Posterior vena cava (tissue), 2 donors: ENCODE measurements at regions of chr1 and their contacts with region 1.

Region 1: GRCh38 chr1:47703981-47704596 is 266.2 kb downstream of the FOXD2 start:
- DNase-seq: peak; percentile 57

Region 2: DNA sequence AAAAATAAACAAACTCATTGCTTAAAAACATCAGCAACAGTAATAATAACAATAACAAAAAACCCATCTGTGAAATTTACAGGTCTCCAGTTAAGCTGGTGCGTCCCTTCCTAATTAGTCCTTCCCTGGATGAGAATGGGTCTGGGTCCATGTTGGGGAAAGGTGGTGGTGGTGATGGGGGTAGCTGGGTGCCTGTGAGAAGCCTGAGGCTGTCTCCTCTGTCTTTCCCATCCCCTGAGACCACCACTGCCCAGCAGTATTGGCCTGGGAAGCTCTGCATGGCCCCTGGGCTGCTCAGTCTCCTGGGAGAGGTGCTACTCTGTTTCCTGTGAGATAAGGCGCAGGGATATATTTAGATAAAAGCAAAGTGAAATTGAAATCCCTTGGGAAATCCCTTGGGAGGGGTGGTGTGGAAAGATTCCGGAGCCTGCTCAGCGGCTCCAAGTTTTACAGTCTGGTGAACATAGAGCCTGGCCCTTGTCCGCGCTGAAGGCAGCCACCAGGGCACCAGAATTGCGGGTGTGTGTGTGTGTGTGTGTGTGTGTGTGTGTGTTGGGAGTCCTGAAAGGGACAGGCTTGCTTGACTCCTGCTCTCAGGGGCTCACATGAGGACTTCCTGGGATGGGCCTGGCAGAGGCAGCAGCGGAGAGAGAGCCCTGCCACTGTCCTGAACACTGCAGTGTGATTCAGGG is 116.1 kb before region 1 on chr1:
- intact Hi-C with region 1: loop called in 1 of 2 experiments (anchors 5 kb)
- DNase-seq: no peak

Region 3: DNA sequence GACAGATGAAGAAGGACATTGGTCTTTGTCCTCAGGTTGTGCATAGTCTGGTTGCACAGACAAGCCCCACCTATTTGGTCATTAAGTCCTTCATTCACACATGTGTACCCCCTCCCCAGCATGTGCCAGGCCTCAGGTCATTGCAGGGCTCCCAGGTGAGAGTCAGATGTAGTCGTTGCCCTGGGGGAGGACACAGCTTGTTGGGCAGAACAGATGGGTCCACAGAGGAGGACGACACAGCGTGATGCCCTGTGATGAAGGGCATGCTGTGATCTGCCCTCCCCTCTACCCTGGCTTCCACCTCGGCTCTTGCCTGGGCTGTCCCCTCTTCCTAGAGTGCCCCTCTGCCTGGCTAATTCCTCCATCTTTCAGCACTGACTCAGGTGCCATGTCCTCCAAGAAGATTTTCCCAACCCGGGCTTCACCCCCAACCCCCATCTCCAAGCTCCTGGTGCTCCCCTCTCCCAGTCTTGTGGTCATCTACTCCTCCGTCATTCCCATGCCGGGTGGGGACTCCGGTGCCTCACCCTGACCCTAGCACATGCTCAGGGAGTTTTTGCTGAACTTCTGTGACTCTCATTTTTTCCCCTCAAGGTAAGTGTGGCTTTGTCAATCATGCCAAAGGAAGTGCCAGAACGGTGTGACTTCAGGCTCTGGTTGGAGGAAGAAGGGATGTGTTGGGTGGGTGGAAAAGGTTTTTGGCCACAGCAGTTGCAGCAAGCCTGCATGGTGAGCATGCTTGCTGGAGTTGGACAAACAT is 45.7 kb before region 1 on chr1:
- intact Hi-C with region 1: loop called in 1 of 2 experiments (anchors 1 kb)
- DNase-seq: peak; percentile 34